ENCODE measurements at regions of chr1 and their contacts with region 1.

Region 1: GRCh38 chr1:214102907-214103306 is 115.1 kb downstream of the PROX1 start:
- DNase-seq: peak; percentile 96
- ATAC-seq: peak; percentile 95
- H3K4me3 ChIP-seq: peak overlapping the region; percentile 8; the same call in 1 of the 2 replicates
- H3K27ac ChIP-seq: peak overlapping the region; percentile 71
- H3K4me1 ChIP-seq: peaks cover 18% of the 10 kb centered on the region
- H3K27me3 ChIP-seq: no peaks in the 10 kb centered on the region
- CTCF ChIP-seq: no peak

Region 2: DNA sequence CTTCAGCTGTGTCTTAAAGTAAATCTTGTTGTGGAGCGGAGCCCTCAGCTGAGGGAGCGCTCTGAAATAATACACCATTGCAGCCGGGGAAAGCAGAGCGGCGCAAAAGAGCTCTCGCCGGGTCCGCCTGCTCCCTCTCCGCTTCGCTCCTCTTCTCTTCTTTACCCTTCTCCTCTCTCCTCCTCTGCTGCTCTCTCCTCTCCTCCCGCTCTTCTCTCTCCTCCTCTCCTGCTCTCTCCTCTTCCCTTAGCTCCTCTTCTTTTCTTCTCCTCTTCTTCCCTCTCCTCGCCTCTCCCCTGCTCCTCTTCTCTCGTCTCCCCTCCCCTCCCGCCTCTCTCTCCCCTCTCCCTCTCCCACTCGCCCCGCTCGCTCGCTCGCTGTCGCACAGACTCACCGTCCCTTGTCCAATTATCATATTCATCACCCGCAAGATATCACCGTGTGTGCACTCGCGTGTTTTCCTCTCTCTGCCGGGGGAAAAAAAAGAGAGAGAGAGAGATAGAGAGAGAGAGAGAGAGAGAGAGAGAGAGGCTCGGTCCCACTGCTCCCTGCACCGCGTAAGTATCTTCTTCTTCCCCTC is 114.9 kb before region 1 on chr1 and contains the start of gene PROX1:
- CTCF ChIA-PET with region 1: no interaction called
- POLR2A ChIA-PET with region 1: no interaction called
- intact Hi-C with region 1: loop called (anchors 5 kb)
- DNase-seq: peak; percentile 82
- ATAC-seq: peak; percentile 89
- H3K4me3 ChIP-seq: peak within 1 kb of the TSS; percentile 70
- H3K27ac ChIP-seq: no peak within 1 kb of the TSS
- H3K4me1 ChIP-seq: no peaks in the 10 kb centered on the region
- H3K27me3 ChIP-seq: peaks cover 96% of the 10 kb centered on the region
- CTCF ChIP-seq: 0 out of 2 replicates have a peak, but pooled peaks have one; percentile 10
- total RNA-seq, gene PROX1: 0.12 TPM in 1 of 2 replicates, not detected in the other

Region 3: DNA sequence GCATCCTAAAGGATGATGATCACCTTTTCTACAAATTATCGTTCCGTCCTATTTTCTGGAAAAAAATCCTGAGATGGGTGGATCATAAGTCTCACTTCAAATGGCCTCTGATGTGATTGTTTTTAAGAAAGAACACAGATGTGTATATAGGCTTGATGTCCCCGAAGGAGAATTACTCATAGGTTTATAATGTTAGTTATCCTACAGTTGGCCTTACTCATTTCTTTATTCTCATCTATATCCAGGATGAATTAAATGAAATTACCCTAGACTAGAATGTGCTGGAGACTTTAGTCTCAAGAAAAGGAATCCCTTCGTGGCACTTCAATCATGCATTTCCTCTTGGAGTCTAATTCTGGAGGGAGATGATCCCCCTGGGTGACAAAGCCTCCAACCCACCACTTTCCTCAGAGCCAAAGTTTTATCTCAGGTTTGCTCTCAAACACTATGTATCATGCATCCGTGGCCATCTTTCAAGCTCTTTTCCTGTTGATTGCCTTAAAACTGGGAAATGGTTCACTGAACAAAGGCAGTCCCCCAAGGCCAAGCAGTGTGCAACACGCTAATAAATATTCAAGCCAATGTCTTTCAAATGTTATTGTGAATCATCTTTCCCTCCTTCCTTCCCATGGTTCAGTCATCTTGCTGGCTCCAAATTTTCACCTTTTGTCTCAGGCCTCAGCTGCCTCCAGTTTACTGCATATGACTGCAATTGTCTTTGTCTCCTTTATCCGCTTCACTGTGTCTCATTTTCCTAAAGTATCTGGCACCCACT is 145.6 kb after region 1 on chr1:
- CTCF ChIA-PET with region 1: no interaction called
- POLR2A ChIA-PET with region 1: no interaction called
- intact Hi-C with region 1: no loop called
- DNase-seq: peak; percentile 19
- ATAC-seq: peak; percentile 62
- H3K4me3 ChIP-seq: no peak overlapping the region
- H3K27ac ChIP-seq: no peak overlapping the region
- H3K4me1 ChIP-seq: no peaks in the 10 kb centered on the region; the same call in 1 of the 2 replicates
- H3K27me3 ChIP-seq: no peaks in the 10 kb centered on the region; the same call in 1 of the 2 replicates
- CTCF ChIP-seq: no peak

Measured in PC-3 (cell line).